ENCODE measurements at regions of chr5 and their contacts with region 1.

Region 1: GRCh38 chr5:72895758-72896157 is 60.1 kb upstream of the FCHO2 start:
- H3K4me3 Mint-ChIP-seq: no peak overlapping the region
- H3K27ac Mint-ChIP-seq: no peak overlapping the region
- H3K4me1 Mint-ChIP-seq: no peaks in the 10 kb centered on the region
- H3K27me3 Mint-ChIP-seq: no peaks in the 10 kb centered on the region

Region 2: DNA sequence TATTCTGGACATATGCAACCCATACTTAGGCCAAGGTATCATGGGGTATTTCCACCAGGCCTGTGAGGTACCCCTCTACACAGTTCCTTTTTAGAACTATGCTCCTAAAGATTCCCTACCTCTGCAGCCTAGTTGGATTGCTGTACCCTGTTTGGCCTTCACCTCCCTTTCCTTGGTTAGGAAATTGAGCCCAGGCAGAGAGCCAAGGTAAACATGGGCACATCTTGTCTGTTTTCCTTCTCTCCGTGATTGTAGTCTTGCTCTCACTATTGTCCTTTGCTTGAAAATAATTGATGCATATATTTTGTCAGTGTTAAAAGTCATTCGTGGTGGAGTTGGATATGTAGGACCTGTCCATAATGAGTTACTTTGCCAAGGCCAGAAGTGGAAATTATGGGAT is 1413.6 kb before region 1 on chr5:
- intact Hi-C with region 1: loop called (anchors 10 kb)
- H3K4me3 Mint-ChIP-seq: no peak overlapping the region
- H3K27ac Mint-ChIP-seq: no peak overlapping the region
- H3K4me1 Mint-ChIP-seq: peaks cover 8% of the 10 kb centered on the region
- H3K27me3 Mint-ChIP-seq: no peaks in the 10 kb centered on the region

Region 3: GRCh38 chr5:71974165-71974564 is 921.6 kb before region 1 on chr5:
- intact Hi-C with region 1: no loop called
- H3K4me3 Mint-ChIP-seq: no peak overlapping the region
- H3K27ac Mint-ChIP-seq: no peak overlapping the region
- H3K4me1 Mint-ChIP-seq: no peaks in the 10 kb centered on the region
- H3K27me3 Mint-ChIP-seq: no peaks in the 10 kb centered on the region

Region 4: DNA sequence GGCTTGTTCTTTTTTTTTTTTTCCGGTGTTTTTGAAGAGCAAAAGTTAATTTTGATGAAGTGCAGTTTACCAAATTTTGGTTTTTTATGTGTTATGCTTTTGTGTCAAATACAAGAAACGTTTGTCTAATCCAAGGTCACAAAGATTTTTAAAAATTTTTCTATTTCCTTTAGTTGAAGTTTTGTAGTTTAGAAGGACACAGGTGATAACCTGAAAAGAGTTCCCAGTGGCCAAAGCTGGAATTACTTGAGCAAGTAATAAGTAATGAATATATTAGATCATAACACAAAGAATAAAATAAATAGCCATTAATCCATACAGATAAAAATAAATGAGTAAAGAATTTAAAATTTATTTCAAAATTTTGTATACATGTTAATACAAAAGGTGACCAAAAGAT is 131.6 kb after region 1 on chr5:
- intact Hi-C with region 1: no loop called
- H3K4me3 Mint-ChIP-seq: no peak overlapping the region
- H3K27ac Mint-ChIP-seq: no peak overlapping the region
- H3K4me1 Mint-ChIP-seq: peaks cover 6% of the 10 kb centered on the region
- H3K27me3 Mint-ChIP-seq: no peaks in the 10 kb centered on the region